ENCODE measurements at regions of chr16 and their contacts with region 1.

Region 1: DNA sequence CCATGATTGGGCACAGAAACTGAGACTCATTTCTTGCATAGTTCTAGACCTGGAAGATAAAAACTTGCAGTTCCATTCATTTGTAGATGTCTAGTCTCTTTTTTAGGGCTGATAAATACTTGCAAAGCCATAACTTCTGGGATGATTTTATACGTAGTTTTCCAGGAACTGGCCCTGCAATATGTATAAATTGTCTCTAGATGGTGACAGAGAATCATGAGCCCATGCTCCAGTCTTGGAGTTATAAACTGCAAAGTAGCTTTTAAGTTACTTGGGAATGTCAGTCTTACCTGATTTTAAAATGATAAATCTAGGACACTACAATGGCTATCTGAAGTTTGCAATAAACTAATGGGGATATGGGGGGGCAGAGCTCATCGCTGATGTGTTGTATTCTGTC is 3.0 kb upstream of the ADAMTS18 start:
- DNase-seq: no peak

Region 2: GRCh38 chr16:77570574-77570973 is 132.7 kb after region 1 on chr16:
- CTCF ChIA-PET with region 1: interaction called, 10 read pairs
- POLR2A ChIA-PET with region 1: no interaction called
- DNase-seq: no peak